HEK293 (cell line): ENCODE measurements at regions of chr1 and their contacts with region 1.

Region 1: DNA sequence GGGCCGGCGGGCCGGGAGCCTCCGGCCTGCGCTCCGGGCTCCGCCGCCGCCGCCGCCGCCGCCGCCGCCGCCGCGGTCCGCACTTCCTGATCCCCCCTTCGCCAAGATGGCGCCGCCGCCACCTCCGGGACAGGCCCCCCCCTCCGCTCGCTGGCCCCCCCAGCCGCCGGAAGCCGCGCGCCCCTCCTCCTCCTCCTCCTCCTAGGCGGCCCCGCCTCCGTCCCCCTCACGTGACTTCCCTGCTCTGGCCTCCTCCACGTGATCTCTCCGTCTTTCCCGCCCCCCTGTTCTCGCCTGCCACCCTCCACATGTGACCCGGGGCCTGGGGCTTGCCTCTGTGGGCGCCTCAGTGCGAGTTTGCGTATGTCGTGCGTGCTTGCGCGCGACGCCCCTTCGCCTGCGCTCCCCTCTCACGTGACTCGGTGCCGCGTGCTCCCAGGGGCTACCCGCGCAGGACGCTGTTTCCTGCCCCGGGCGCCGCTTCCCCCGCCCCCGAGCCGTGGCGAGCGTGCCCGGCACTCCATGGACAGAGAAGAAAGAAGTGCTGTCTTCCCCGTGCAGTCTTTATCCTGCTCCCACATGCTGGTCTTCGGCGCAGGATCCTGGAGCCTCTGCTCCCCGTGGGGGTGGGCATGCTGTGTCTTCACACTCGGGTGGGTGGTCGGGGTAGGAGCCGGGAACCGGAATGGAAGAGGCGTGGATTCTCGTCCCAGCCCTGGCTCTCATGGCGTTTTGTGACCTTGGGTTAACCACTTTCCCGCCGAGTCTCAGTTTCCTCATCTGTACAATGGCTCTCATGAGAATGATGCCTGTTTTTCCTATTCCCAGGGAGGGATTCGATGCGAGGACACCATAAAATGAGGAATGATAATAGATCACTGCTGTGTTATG is at the start of gene UBE2Q1:
- H3K4me3 ChIP-seq: peak within 1 kb of the TSS; percentile 81
- H3K27ac ChIP-seq: peak within 1 kb of the TSS; percentile 73
- H3K4me1 ChIP-seq: no peaks in the 10 kb centered on the region
- CTCF ChIP-seq: no peak; the same call in 1 of the 2 replicates

Region 2: GRCh38 chr1:154220071-154220969 is 338.5 kb before region 1 on chr1 and contains the start of gene UBAP2L:
- CTCF ChIA-PET with region 1: no interaction called
- POLR2A ChIA-PET with region 1: no interaction called
- H3K4me3 ChIP-seq: peak within 1 kb of the TSS; percentile 87
- H3K27ac ChIP-seq: peak within 1 kb of the TSS; percentile 96
- H3K4me1 ChIP-seq: no peaks in the 10 kb centered on the region
- CTCF ChIP-seq: peak; percentile 21; the same call in 1 of the 2 replicates

Region 3: GRCh38 chr1:154546264-154547063 is 12.4 kb before region 1 on chr1:
- CTCF ChIA-PET with region 1: interaction called, 16 read pairs
- POLR2A ChIA-PET with region 1: no interaction called
- H3K4me3 ChIP-seq: no peak overlapping the region
- H3K27ac ChIP-seq: no peak overlapping the region
- H3K4me1 ChIP-seq: no peaks in the 10 kb centered on the region
- CTCF ChIP-seq: peak; percentile 64

Region 4: DNA sequence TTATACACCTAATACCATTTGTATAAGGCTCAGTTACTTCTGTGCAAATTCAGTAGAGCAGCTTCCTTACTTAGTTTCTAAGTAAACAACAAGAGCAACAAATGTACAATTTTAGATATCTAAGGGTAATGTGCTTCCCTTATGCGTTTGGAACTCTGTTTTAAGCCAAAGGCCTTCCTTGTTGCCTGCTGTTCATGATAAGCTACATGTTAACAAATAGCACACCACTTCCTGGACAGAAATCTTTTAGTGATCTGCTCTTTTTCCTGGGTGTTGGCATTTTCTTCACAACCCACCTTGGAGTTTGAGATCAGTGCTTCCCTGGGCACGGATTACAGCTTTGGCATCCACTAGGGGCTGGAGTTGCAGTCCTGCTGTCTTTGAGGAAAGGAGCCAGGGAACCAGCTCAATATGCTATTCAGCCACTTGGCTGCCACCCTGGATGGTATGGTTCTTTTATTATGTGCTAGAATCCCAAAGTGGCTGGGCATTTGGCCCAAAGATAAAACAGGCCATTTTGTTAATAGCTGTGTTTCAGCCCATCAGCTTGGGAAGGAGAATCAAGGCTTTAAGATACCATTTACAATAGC is 104.7 kb after region 1 on chr1:
- CTCF ChIA-PET with region 1: interaction called, 21 read pairs
- POLR2A ChIA-PET with region 1: no interaction called
- H3K4me3 ChIP-seq: no peak overlapping the region
- H3K27ac ChIP-seq: no peak overlapping the region
- H3K4me1 ChIP-seq: no peaks in the 10 kb centered on the region
- CTCF ChIP-seq: no peak

Region 5: DNA sequence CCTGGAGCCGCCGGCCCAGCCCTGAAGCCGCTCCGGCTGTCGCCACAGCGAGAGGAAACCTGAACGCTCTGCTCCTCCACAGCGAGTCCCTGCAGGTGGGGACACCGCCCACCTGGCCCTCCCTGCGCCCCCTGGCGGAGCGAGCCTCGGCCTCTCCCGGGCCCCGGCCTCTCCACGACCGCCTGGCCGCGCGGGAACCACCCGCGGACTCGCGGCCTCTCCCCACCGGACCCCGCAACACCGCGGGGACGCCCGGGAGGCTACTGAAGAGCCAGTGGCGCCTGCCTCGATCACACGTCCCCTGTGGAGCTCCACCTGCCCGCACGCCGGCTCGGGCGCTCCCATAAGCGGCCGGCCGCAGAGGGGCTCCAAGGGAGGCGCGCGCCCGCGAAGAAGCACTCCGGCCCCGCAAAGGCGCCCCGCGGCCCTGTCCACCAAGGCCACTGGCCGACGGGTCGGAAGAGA is 201.7 kb after region 1 on chr1:
- CTCF ChIA-PET with region 1: interaction called, 10 read pairs
- POLR2A ChIA-PET with region 1: no interaction called
- H3K4me3 ChIP-seq: peak overlapping the region; percentile 39
- H3K27ac ChIP-seq: no peak overlapping the region; the same call in 1 of the 2 replicates
- H3K4me1 ChIP-seq: no peaks in the 10 kb centered on the region
- CTCF ChIP-seq: peak; percentile 87

Region 6: DNA sequence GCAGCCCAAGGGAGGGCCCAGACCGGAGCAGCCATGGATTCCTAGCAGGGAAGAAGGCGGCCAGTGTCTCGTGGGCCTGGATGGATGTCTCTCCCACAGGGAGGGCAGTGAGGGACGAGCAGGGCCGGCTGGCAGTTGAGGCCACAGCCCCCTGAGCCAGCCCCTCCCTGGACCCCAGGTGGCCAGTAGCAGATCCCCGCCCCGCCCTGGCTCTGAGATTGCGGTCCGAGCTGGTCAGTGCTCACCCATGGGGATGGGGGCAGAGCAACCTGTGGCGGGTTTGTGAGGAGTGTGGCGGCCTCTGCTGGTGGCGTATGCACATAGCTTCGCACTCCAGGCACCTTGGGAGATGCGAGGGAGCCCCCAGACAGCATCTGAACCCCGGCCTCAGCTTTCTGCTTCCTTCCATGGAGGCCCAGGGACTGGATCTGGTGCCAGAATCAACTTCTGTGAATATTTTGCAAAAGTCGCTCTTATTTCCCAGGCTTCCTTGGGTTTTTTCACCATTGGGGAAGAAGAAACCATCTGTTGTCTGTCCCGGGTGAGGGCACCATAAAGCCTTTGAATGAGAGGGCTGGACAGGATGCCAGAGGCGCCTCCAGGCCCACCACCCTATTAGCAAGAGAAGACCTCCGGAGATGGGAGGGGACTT is 319.7 kb after region 1 on chr1:
- CTCF ChIA-PET with region 1: interaction called, 35 read pairs
- POLR2A ChIA-PET with region 1: no interaction called
- H3K4me3 ChIP-seq: no peak overlapping the region
- H3K27ac ChIP-seq: no peak overlapping the region
- H3K4me1 ChIP-seq: no peaks in the 10 kb centered on the region
- CTCF ChIP-seq: peak; percentile 86